Activated T-helper 1 cell treated with anti-CD3 and anti-CD28 coated beads, Interleukin-12 subunit alpha, Interleukin-12 subunit beta, Interleukin-2, Interleukin-4 antibody, amounts not matched to agents 30 ng/mL and 10 ng/mL and 1 ng/mL, durations not matched to agents 14 hours and 24 hours and 36 hours (primary cell): ENCODE measurements at regions of chr11 and their contacts with region 1.

Region 1: GRCh38 chr11:70191495-70192140 is 11.5 kb upstream of the FADD start:
- DNase-seq: peak; percentile 50
- H3K4me3 Mint-ChIP-seq: no peak overlapping the region
- H3K27ac Mint-ChIP-seq: no peak overlapping the region
- H3K4me1 Mint-ChIP-seq: peaks cover 5% of the 10 kb centered on the region
- H3K27me3 Mint-ChIP-seq: peaks cover 3% of the 10 kb centered on the region

Region 2: DNA sequence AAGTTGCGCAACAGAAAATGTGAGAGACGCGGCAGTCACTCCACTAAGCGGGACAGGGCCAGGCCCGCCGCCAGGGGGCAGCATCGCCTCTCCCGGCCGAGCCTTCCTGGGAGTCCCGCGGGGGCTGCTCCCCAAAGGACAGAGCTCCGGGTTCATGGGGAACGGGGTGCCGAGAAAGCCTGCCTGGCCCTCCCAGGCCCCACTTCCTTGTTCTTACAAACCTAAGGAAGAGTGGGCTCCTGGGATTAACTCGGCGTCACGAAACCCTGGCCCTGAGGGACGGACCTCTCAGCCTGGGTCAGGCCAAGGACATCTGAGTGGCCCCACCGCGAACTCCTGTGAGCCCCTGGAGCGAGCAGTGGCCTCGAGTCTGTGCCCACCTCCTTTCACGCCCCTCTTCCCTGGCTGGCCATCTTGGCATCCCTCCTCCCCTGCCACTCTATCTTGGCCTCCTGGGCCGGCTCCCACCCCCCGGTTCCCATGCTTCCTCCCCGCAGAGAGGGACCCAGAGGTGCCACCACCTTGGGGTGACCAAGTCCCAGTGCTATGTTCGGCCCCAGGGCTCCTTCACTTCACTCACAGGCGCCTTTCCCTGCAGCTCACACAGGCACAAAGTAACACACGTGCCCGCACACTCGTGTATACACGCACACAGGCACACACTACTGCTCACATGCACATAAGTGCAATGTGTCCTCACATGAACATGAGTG is 272.5 kb before region 1 on chr11:
- intact Hi-C with region 1: loop called (anchors 1 kb)
- DNase-seq: peak; percentile 38
- H3K4me3 Mint-ChIP-seq: no peak overlapping the region
- H3K27ac Mint-ChIP-seq: no peak overlapping the region
- H3K4me1 Mint-ChIP-seq: no peaks in the 10 kb centered on the region
- H3K27me3 Mint-ChIP-seq: peaks cover 12% of the 10 kb centered on the region

Region 3: DNA sequence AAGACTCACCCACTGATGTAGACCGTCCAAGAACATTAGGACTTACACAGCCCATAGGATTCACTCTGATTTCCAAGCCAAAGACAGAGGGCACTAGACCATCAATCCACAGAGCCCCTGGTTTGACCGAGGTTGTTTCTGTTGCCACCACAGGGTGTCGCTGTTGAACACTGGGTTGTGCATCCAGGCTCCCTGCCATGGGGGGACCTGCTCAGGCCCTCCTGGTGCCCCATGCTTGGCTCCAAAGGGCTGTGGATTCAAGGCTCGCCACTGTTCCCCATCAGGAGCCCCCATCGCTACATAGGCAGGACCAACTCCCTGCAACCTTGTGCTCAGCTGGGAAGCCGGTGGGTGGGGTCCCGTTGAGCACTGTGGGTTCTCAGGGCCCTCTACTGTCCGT is 241.5 kb before region 1 on chr11:
- intact Hi-C with region 1: loop called (anchors 1 kb)
- DNase-seq: no peak
- H3K4me3 Mint-ChIP-seq: no peak overlapping the region
- H3K27ac Mint-ChIP-seq: no peak overlapping the region
- H3K4me1 Mint-ChIP-seq: no peaks in the 10 kb centered on the region
- H3K27me3 Mint-ChIP-seq: no peaks in the 10 kb centered on the region

Region 4: GRCh38 chr11:70048279-70049027 is 143.2 kb before region 1 on chr11:
- intact Hi-C with region 1: no loop called
- DNase-seq: no peak
- H3K4me3 Mint-ChIP-seq: no peak overlapping the region
- H3K27ac Mint-ChIP-seq: no peak overlapping the region
- H3K4me1 Mint-ChIP-seq: no peaks in the 10 kb centered on the region
- H3K27me3 Mint-ChIP-seq: peaks cover 18% of the 10 kb centered on the region